ENCODE measurements at regions of chr17 and their contacts with region 1.

Region 1: GRCh38 chr17:60169921-60170742 is 20.4 kb downstream of the CA4 start:
- DNase-seq: peak; percentile 42
- H3K4me3 Mint-ChIP-seq: no peak overlapping the region
- H3K27ac Mint-ChIP-seq: peak overlapping the region; percentile 55
- H3K4me1 Mint-ChIP-seq: peaks cover 29% of the 10 kb centered on the region
- H3K27me3 Mint-ChIP-seq: no peaks in the 10 kb centered on the region

Region 2: DNA sequence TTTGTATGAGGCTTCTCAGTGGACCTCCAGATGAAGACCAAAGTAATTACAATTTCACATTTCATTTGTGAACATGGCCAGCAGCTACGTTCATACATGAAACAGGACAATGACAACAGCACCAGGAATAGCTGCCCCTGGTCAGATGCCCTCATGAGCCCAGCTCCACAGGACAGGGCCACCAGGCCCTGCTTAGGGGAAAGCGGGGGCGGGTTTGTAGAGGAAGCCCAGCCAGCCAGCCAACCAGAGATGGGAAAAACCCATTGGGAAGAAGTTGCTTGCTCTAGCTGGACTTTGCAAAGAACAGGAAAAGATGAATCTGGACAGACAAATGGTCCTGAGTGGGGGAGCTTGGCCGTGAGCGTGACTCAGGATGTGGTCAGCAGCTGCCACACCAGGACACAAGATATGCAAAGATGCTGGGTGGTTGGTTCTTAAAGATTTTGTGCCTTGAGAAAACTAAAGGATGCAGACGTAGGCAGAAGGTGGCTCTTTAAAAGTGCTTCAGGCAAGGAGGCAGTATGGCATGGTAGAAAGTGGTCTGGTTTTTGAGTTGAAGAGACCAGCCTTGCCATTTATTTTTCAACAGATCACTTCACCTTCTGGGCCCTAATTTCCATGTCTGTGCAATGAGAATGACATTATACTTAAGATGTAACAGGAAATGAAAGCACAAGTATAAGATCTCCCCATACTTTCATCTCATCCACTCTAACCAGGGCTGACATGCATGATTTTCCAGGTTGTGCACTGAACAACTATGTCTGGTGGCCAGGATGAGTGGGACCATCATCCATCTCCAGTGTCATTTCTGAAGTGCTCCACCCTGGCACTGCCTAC is 63.7 kb before region 1 on chr17:
- CTCF ChIA-PET with region 1: no interaction called
- POLR2A ChIA-PET with region 1: no interaction called
- intact Hi-C with region 1: no loop called
- DNase-seq: no peak
- H3K4me3 Mint-ChIP-seq: no peak overlapping the region
- H3K27ac Mint-ChIP-seq: no peak overlapping the region
- H3K4me1 Mint-ChIP-seq: peaks cover 14% of the 10 kb centered on the region
- H3K27me3 Mint-ChIP-seq: peaks cover 31% of the 10 kb centered on the region

Region 3: DNA sequence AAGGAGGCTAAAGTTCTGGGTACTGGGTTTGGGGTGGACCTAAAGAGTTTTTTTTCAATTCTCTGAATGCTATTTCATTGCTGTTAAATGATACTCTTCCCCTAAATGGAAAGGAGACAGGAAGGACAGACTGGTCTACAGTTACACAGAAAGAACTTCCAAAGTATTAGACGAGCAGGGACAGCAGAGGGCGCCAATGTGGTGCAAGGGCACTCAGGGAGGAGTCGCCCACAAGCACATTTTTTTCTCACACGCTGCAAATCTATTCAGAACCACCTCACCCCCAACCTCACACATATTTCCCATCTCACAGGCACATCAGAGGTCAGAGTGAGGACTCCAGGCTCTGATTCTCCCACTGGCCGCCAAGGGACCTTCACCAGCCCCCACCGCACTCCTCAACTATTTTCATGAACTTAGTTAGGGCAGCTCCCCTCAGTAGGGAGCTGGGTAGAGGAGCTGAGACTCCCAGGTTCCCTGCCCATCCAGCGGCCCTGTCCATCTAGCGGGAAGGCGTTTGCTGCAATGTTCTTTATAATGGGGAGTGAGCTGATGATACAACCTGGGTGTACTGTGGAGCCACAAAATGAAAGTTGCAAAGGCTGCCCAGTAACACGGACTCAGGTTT is 27.1 kb before region 1 on chr17:
- CTCF ChIA-PET with region 1: interaction called, 5 read pairs
- POLR2A ChIA-PET with region 1: interaction called, 3 read pairs
- intact Hi-C with region 1: loop called (anchors 1 kb)
- DNase-seq: peak; percentile 87
- H3K4me3 Mint-ChIP-seq: peak overlapping the region; percentile 8
- H3K27ac Mint-ChIP-seq: no peak overlapping the region
- H3K4me1 Mint-ChIP-seq: peaks cover 23% of the 10 kb centered on the region
- H3K27me3 Mint-ChIP-seq: peaks cover 85% of the 10 kb centered on the region

Region 4: GRCh38 chr17:60151355-60152065 is 18.6 kb before region 1 on chr17:
- CTCF ChIA-PET with region 1: no interaction called
- POLR2A ChIA-PET with region 1: no interaction called
- intact Hi-C with region 1: loop called (anchors 1 kb)
- DNase-seq: peak; percentile 47
- H3K4me3 Mint-ChIP-seq: no peak overlapping the region
- H3K27ac Mint-ChIP-seq: no peak overlapping the region
- H3K4me1 Mint-ChIP-seq: peaks cover 7% of the 10 kb centered on the region
- H3K27me3 Mint-ChIP-seq: peaks cover 62% of the 10 kb centered on the region